A549 (cell line): ENCODE measurements at regions of chr9 and their contacts with region 1.

Region 1: DNA sequence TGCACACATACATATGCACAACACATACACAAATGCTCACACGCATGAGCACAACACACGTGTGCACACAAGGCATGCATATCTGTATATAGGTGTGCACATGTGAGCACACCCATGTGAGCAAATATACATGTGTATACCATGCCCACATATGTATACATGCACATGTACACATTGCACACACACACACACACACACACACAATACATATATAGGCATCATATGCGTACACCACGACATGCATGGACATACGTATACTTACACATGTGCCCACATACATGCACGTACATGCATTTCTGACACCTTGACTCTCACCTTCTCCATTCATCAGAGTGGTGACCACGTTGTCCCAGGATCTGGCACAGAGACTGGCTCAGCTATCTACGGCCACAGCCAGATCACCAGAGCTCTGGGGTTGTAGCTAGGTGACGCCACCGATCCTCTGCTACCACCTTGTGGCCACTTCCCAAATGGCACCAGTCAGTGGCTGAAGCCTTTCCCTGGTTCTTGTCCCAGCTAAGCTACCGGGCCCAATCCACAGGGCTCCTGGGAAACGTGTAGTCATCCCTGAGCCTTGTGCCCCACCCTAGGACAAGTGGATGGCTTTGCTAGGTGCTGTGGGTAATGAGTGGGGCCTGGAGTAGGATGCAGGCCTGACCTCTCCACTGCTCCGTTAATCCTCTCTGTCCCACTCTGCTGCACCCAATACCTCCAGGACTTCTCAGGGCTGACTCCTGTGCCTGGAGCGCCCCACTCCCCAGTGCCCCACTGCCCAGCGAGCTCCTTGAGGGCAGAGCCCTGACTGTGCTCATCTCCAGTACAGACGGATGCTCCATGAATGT is 194.4 kb downstream of the RGS3 start:
- DNase-seq: peak; percentile 85 to 87
- ATAC-seq: peak; percentile 89 to 96
- H3K4me3 ChIP-seq: no peak overlapping the region
- H3K27ac ChIP-seq: peak overlapping the region in 1 of 2 experiments; percentile 64; a peak in 3 of 6 replicates
- H3K4me1 ChIP-seq: peaks cover 8% of the 10 kb centered on the region
- CTCF ChIP-seq: peak; percentile 94
- EP300 ChIP-seq: no peak
- POLR2A ChIP-seq: no peak
- RAD21 ChIP-seq: peak; percentile 97

Region 2: DNA sequence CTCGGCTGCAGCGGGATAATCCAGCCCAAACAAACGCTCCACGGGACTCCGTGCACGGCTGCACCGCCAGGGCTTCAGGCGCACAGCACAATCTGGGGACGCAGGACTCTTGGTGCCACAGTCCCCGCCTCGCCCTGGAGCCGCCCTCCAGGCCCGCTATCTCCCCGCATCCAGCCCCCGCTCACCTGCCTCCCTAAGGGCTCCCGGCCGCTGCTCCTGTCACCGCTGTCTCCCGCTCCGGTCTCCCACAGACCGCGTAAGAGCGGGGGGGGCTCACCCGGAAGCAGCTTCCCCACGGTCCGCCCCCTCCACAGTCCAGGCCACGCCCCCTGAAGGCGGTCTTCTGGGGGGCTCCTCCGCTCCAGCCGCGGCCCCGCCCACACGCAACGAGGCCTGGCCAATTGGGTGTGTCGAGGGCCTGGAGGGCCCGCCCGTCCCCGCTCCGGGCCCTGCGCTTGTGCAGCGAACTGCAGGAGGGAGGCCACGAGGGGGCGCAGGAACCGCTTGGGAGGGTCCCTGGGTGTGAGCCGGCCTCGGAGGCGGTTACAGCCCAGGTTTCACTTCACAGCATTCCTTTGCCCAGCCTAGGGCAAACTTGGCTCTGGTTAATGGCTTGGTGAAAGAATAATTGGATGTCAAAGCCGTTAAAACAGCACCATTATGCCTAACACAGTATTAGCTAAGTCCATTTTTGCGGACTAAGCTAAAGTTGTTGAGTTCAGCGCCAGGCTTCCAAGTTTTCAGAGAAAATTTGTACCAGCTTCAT is 256.7 kb before region 1 on chr9 and contains the start of gene ALAD:
- CTCF ChIA-PET with region 1: interaction called, 56 read pairs
- POLR2A ChIA-PET with region 1: no interaction called
- DNase-seq: peak; percentile 93 to 98
- ATAC-seq: peak; percentile 97 to 98
- H3K4me3 ChIP-seq: peak within 1 kb of the TSS; percentile 73
- H3K27ac ChIP-seq: peak within 1 kb of the TSS; percentile 66 to 85
- H3K4me1 ChIP-seq: peaks cover 10% of the 10 kb centered on the region; the same call in 1 of the 3 replicates
- CTCF ChIP-seq: peak; percentile 85
- EP300 ChIP-seq: no peak
- POLR2A ChIP-seq: peak; percentile 60
- RAD21 ChIP-seq: peak; percentile 49 to 66
- polyA plus RNA-seq, gene ALAD: 5.7 and 9.5 TPM in 2 replicates

Region 3: DNA sequence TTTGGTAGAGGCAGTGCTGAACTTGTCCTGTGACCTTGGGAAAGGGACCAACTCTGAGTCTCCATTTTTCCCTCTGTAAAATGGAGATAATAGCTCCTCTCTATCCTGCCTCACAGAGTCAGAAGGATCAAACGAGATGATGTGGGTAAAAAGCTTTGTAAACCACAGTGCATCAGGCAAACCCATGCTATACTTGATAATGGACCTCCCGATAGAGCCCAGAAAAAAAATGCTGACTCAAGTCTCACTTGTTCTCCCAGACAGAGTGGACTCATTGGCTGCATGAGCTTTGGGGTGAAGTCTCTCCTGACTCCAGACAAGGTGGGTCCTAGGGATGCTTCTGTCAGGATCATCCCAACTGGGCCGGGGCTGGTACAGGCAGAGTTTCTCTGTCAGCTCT is 162.4 kb before region 1 on chr9:
- CTCF ChIA-PET with region 1: interaction called, 10 read pairs
- POLR2A ChIA-PET with region 1: no interaction called
- DNase-seq: no peak
- ATAC-seq: no peak
- H3K4me3 ChIP-seq: no peak overlapping the region
- H3K27ac ChIP-seq: no peak overlapping the region
- H3K4me1 ChIP-seq: no peaks in the 10 kb centered on the region
- CTCF ChIP-seq: no peak
- EP300 ChIP-seq: no peak
- POLR2A ChIP-seq: no peak
- RAD21 ChIP-seq: no peak

Region 4: DNA sequence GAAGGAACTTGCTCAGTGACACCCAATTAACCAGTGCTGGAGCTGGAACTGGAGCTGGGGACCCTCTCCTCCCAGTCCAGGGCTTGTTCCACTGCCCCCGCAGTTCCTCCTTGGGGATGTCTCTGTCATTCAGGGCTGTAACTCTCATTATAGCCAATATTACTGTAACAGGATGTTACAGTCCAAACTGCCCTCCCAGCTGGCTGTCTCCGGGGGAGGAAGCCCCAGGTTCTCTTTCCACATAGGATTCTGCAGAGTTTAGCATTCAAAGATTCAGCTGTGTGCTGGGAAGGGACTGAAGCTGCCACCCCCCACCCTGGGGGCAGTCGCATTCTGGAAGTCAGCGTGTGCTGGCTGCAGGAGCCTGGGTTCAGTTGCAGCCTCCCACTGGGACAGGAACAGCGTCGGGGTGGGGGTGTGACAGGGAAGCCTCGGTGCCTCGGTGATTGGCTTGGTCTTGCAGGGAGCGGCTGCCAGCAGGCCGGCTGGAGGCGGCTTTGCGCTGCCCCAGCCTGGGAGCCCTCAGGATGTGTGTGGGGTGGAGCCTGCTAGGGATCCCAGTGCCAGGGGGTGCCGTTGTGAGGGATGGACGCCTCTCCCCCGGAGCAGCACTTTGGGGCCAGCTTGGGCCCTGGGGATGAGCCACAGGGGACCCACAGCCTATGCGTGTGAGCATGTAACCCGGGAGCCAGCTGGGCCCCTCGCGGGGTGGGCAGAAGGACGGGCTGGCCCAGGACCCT is 93.3 kb before region 1 on chr9:
- CTCF ChIA-PET with region 1: interaction called, 12 read pairs
- POLR2A ChIA-PET with region 1: no interaction called
- DNase-seq: no peak
- ATAC-seq: no peak
- H3K4me3 ChIP-seq: no peak overlapping the region
- H3K27ac ChIP-seq: peak overlapping the region in 1 of 2 experiments; percentile 28; a peak in 1 of 6 replicates
- H3K4me1 ChIP-seq: 0 out of 3 replicates have a peak, but pooled peaks cover 4% of the 10 kb centered on the region
- CTCF ChIP-seq: no peak
- EP300 ChIP-seq: no peak
- POLR2A ChIP-seq: no peak
- RAD21 ChIP-seq: no peak

Region 5: GRCh38 chr9:113622600-113623400 is 35.1 kb before region 1 on chr9:
- CTCF ChIA-PET with region 1: interaction called, 120 read pairs
- POLR2A ChIA-PET with region 1: no interaction called
- DNase-seq: peak; percentile 60 to 74
- ATAC-seq: peak; percentile 80 to 82
- H3K4me3 ChIP-seq: no peak overlapping the region
- H3K27ac ChIP-seq: peak overlapping the region; percentile 30 to 77; a peak in 5 of 6 replicates
- H3K4me1 ChIP-seq: peaks cover 43% of the 10 kb centered on the region
- CTCF ChIP-seq: no peak
- EP300 ChIP-seq: no peak
- POLR2A ChIP-seq: no peak
- RAD21 ChIP-seq: no peak

Region 6: DNA sequence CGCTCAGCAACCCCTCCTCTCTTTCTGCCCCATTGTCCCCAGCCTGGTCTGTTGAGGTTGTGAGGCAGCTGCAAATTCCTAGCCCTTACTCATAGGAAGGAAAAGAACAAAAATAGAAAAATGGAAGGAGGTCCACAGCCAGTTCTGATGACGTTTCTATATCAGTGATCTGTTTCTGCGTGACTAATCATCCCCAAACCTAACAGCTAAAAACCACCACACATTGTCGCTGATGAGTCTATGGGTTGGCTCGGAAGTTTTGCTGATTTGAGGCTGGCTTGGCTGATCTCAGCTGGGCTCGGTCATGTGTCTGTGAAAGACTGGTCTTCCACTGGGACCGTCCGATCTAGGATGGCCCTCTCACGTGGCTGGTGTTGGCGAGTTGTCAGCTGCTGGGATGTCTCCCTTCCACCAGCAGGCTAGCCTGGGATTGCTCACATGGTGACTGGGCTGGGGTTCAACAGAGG is 17.6 kb after region 1 on chr9:
- CTCF ChIA-PET with region 1: interaction called, 100 read pairs
- POLR2A ChIA-PET with region 1: no interaction called
- DNase-seq: no peak
- ATAC-seq: peak in 1 of 2 experiments; percentile 45; a peak in 3 of 6 replicates
- H3K4me3 ChIP-seq: no peak overlapping the region
- H3K27ac ChIP-seq: no peak overlapping the region
- H3K4me1 ChIP-seq: no peaks in the 10 kb centered on the region
- CTCF ChIP-seq: no peak
- EP300 ChIP-seq: no peak
- POLR2A ChIP-seq: no peak
- RAD21 ChIP-seq: no peak

Region 7: GRCh38 chr9:113734826-113735225 is 76.9 kb after region 1 on chr9:
- CTCF ChIA-PET with region 1: no interaction called
- POLR2A ChIA-PET with region 1: no interaction called
- DNase-seq: no peak
- ATAC-seq: no peak
- H3K4me3 ChIP-seq: no peak overlapping the region
- H3K27ac ChIP-seq: no peak overlapping the region
- H3K4me1 ChIP-seq: no peaks in the 10 kb centered on the region
- CTCF ChIP-seq: no peak
- EP300 ChIP-seq: no peak
- POLR2A ChIP-seq: no peak
- RAD21 ChIP-seq: no peak

Region 8: GRCh38 chr9:113772121-113772810 is 114.3 kb after region 1 on chr9:
- CTCF ChIA-PET with region 1: no interaction called
- POLR2A ChIA-PET with region 1: no interaction called
- DNase-seq: no peak
- ATAC-seq: no peak
- H3K4me3 ChIP-seq: no peak overlapping the region
- H3K27ac ChIP-seq: no peak overlapping the region
- H3K4me1 ChIP-seq: no peaks in the 10 kb centered on the region
- CTCF ChIP-seq: no peak
- EP300 ChIP-seq: no peak
- POLR2A ChIP-seq: no peak
- RAD21 ChIP-seq: no peak

Region 9: GRCh38 chr9:113979343-113980127 is 321.6 kb after region 1 on chr9:
- CTCF ChIA-PET with region 1: no interaction called
- POLR2A ChIA-PET with region 1: no interaction called
- DNase-seq: no peak
- ATAC-seq: no peak
- H3K4me3 ChIP-seq: no peak overlapping the region
- H3K27ac ChIP-seq: no peak overlapping the region
- H3K4me1 ChIP-seq: peaks cover 3% of the 10 kb centered on the region; the same call in 2 of the 3 replicates
- CTCF ChIP-seq: no peak
- EP300 ChIP-seq: no peak
- POLR2A ChIP-seq: no peak
- RAD21 ChIP-seq: no peak